Activated CD8-positive, alpha-beta memory T cell treated with anti-CD3 and anti-CD28 coated beads, Interleukin-2, amount 10 ng/mL, durations not matched to agents 7 days and 5 days (primary cell): ENCODE measurements at regions of chr2 and their contacts with region 1.

Region 1: GRCh38 chr2:85642725-85643124 is 25.3 kb downstream of the SFTPB start:
- DNase-seq: peak; percentile 59
- ATAC-seq: peak; percentile 90
- H3K4me3 Mint-ChIP-seq: no peak overlapping the region
- H3K27ac Mint-ChIP-seq: peak overlapping the region; percentile 82
- H3K4me1 Mint-ChIP-seq: peaks cover 23% of the 10 kb centered on the region
- H3K27me3 Mint-ChIP-seq: no peaks in the 10 kb centered on the region

Region 2: GRCh38 chr2:85619617-85620016 is 23.1 kb before region 1 on chr2:
- CTCF ChIA-PET with region 1: interaction called, 30 read pairs
- DNase-seq: no peak
- ATAC-seq: no peak
- H3K4me3 Mint-ChIP-seq: no peak overlapping the region
- H3K27ac Mint-ChIP-seq: peak overlapping the region; percentile 59
- H3K4me1 Mint-ChIP-seq: peaks cover 36% of the 10 kb centered on the region
- H3K27me3 Mint-ChIP-seq: no peaks in the 10 kb centered on the region

Region 3: DNA sequence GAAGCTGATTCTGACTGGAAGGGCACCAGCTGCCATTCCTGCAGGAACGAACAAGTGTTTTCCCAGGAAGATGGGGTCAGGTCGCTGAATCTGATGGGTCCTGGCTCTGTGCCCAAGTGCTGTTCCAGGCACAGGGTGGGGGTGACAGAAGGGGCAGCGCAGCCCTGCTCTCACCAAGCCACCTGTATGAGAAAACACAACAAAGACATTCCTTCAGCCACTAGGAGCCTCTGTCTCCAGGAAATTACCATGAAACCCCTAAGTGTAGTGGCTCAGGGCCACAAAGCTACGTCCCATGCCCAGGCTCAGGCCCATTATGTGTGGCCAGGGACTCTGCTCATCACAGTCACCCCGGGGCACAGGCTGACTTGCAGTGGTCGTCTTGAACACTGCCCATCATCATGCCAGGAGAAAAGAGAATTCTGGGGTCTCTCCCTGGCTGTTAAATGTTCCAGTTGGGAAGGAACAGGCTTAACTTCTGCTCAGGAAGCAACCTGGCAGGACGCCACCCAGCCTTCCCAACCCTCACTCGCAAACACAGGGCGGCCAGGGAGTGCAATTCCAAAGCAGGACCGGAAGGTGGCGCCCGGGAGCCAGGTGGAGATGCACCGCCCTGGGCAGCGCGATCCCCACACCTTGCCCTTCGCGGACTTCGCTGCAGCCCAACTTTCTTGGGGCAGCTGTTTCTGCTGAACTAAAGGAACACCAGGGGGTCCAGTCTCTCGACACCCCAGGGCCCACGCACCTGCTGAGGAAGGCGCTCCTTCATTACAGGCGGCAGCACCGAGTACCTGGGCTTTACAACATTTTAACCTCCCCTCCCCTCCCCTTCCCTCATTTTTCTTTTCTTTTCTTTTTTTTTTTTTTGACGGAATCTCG is 36.3 kb after region 1 on chr2:
- CTCF ChIA-PET with region 1: interaction called, 11 read pairs
- DNase-seq: peak; percentile 84
- ATAC-seq: peak; percentile 88
- H3K4me3 Mint-ChIP-seq: no peak overlapping the region
- H3K27ac Mint-ChIP-seq: peak overlapping the region; percentile 34
- H3K4me1 Mint-ChIP-seq: peaks cover 32% of the 10 kb centered on the region
- H3K27me3 Mint-ChIP-seq: peaks cover 12% of the 10 kb centered on the region

Region 4: GRCh38 chr2:85712849-85713602 is 70.3 kb after region 1 on chr2:
- CTCF ChIA-PET with region 1: interaction called, 28 read pairs
- DNase-seq: no peak
- ATAC-seq: no peak
- H3K4me3 Mint-ChIP-seq: no peak overlapping the region
- H3K27ac Mint-ChIP-seq: no peak overlapping the region
- H3K4me1 Mint-ChIP-seq: peaks cover 36% of the 10 kb centered on the region
- H3K27me3 Mint-ChIP-seq: peaks cover 26% of the 10 kb centered on the region

Region 5: DNA sequence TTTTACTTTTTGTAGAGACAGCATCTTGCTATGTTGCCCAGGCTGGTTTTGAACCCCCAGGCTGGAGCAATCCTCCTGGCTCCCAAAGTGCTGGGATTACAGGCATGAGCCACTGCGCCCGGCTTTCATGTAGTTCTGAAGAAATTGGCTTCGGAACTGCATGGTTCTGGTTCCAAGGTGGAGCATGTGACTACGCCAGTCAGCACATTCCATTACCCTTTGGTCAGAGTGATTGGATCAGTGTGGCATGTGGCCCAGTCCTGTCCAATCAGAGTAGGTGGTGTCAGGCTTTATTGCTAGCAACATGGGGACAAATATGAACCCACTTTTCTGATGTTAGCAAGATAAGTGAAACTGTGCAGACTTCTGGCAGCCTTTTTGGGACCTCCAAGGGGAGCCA is 94.8 kb after region 1 on chr2:
- CTCF ChIA-PET with region 1: no interaction called
- DNase-seq: no peak
- ATAC-seq: no peak
- H3K4me3 Mint-ChIP-seq: no peak overlapping the region
- H3K27ac Mint-ChIP-seq: no peak overlapping the region
- H3K4me1 Mint-ChIP-seq: no peaks in the 10 kb centered on the region
- H3K27me3 Mint-ChIP-seq: peaks cover 65% of the 10 kb centered on the region